Dendritic cell treated with granulocyte-macrophage colony-stimulating factor and Interleukin-4, amounts not matched to agents 40 ng/mL and 50 ng/mL, for 4 days (primary cell): ENCODE measurements at regions of chr1 and their contacts with region 1.

Region 1: GRCh38 chr1:198641501-198641900 is 2.7 kb downstream of the PTPRC start:
- H3K4me3 Mint-ChIP-seq: peak overlapping the region; percentile 78
- H3K27ac Mint-ChIP-seq: peak overlapping the region; percentile 60
- H3K4me1 Mint-ChIP-seq: peaks cover 35% of the 10 kb centered on the region
- H3K27me3 Mint-ChIP-seq: no peaks in the 10 kb centered on the region

Region 2: DNA sequence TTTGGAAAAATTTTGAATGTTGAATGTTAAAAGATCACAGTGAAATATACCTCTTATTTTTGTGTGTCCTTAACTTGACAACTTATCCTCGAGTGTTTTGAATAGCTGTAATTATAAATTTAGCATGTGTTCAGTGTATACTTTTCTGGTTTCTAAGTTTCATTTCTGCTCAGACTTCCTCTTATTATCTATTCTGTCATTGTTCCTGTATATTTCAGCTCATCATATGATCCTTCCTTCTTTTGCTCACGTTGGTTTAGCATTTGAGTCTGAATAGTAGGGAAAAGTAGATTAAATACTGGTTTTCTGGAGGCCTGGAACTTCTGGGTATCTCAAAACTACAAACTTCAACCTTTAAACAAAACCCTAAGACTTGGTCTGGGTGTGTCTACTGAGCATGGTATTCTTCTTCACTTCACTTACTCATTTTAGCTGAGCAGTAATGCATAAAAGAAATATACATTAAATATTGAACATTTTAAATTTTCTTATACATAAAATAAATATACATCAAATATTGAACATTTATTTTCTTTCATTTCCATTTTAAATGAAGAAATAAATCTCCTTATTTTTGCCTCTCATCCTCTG is 97.7 kb before region 1 on chr1:
- intact Hi-C with region 1: loop called (anchors 5 kb)
- H3K4me3 Mint-ChIP-seq: no peak overlapping the region
- H3K27ac Mint-ChIP-seq: peak overlapping the region; percentile 80
- H3K4me1 Mint-ChIP-seq: peaks cover 18% of the 10 kb centered on the region
- H3K27me3 Mint-ChIP-seq: no peaks in the 10 kb centered on the region

Region 3: GRCh38 chr1:198657550-198658064 is 16.1 kb after region 1 on chr1:
- intact Hi-C with region 1: loop called (anchors 2 kb)
- H3K4me3 Mint-ChIP-seq: peak overlapping the region; percentile 42
- H3K27ac Mint-ChIP-seq: peak overlapping the region; percentile 83
- H3K4me1 Mint-ChIP-seq: peaks cover 43% of the 10 kb centered on the region
- H3K27me3 Mint-ChIP-seq: no peaks in the 10 kb centered on the region

Region 4: DNA sequence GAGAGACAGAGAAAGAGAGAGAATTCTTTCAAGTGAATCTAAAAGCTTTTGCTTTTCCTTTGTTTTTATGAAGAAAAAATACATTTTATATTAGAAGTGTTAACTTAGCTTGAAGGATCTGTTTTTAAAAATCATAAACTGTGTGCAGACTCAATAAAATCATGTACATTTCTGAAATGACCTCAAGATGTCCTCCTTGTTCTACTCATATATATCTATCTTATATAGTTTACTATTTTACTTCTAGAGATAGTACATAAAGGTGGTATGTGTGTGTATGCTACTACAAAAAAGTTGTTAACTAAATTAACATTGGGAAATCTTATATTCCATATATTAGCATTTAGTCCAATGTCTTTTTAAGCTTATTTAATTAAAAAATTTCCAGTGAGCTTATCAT is 115.0 kb after region 1 on chr1:
- intact Hi-C with region 1: no loop called
- H3K4me3 Mint-ChIP-seq: no peak overlapping the region
- H3K27ac Mint-ChIP-seq: no peak overlapping the region
- H3K4me1 Mint-ChIP-seq: peaks cover 22% of the 10 kb centered on the region
- H3K27me3 Mint-ChIP-seq: no peaks in the 10 kb centered on the region